CD4-positive, alpha-beta T cell (primary cell): ENCODE measurements at regions of chr15 and their contacts with region 1.

Region 1: GRCh38 chr15:78422571-78423340 is 15.3 kb upstream of the IREB2 start:
- DNase-seq: peak; percentile 43 to 80 (median 54)
- ATAC-seq: peak; percentile 86
- H3K4me3 ChIP-seq: no peak overlapping the region
- H3K4me3 Mint-ChIP-seq: no peak overlapping the region
- H3K27ac ChIP-seq: no peak overlapping the region
- H3K27ac Mint-ChIP-seq: no peak overlapping the region
- H3K4me1 ChIP-seq: peaks cover 7% of the 10 kb centered on the region
- H3K4me1 Mint-ChIP-seq: peaks cover 20% of the 10 kb centered on the region
- H3K27me3 ChIP-seq: peaks cover 0 to 2% of the 10 kb centered on the region in 2 experiments
- H3K27me3 Mint-ChIP-seq: peaks cover 9% of the 10 kb centered on the region
- CTCF ChIP-seq: peak; percentile 93

Region 2: GRCh38 chr15:77966540-77967290 is 456.0 kb before region 1 on chr15:
- CTCF ChIA-PET with region 1: no interaction called
- POLR2A ChIA-PET with region 1: no interaction called
- intact Hi-C with region 1: loop called in 1 of 2 experiments (anchors 5 kb)
- DNase-seq: peak in 13 of 14 experiments; percentile 23 to 73 (median 50)
- ATAC-seq: peak; percentile 44
- H3K4me3 ChIP-seq: no peak overlapping the region
- H3K4me3 Mint-ChIP-seq: no peak overlapping the region
- H3K27ac ChIP-seq: no peak overlapping the region
- H3K27ac Mint-ChIP-seq: no peak overlapping the region
- H3K4me1 ChIP-seq: no peaks in the 10 kb centered on the region
- H3K4me1 Mint-ChIP-seq: no peaks in the 10 kb centered on the region
- H3K27me3 ChIP-seq: no peaks in the 10 kb centered on the region
- H3K27me3 Mint-ChIP-seq: no peaks in the 10 kb centered on the region
- CTCF ChIP-seq: peak; percentile 90

Region 3: DNA sequence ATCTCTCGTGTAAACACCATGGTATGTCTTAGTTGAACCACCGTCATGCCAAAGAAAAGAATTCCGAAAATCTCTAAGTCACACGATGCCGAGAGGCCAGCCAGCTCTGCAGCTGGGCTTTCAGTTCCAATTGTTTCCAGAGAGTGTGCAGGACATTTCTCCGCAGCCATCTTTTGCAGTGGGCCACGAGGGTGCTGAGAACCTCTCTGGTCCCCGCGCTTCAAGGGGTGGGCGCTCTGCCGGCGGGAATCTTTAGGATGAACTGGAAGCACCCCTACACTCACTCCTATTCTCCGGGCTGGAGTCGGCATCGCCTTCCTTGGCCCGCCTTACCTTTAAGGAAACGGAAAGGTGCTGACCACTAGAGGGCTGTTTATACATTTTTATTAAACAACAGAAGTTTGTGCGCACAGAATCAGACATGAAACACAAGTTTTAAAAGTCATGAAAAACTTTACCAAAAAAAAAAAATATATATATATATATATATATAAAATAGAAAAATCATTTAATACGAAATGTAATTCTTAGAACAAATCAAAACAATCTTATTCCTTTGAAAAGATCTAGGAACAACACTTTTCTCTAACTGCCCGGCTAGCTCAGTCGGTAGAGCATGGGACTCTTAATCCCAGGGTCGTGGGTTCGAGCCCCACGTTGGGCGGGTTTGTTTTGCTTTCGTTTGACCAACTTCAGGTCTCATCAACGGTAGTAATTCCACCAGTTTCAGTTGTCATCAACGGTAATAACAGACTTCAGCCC is 437.4 kb after region 1 on chr15:
- CTCF ChIA-PET with region 1: no interaction called
- POLR2A ChIA-PET with region 1: no interaction called
- intact Hi-C with region 1: no loop called
- DNase-seq: peak; percentile 40 to 82 (median 50)
- ATAC-seq: peak; percentile 74
- H3K4me3 ChIP-seq: peak overlapping the region; percentile 54
- H3K4me3 Mint-ChIP-seq: peak overlapping the region; percentile 86
- H3K27ac ChIP-seq: no peak overlapping the region
- H3K27ac Mint-ChIP-seq: peak overlapping the region; percentile 91
- H3K4me1 ChIP-seq: peaks cover 10% of the 10 kb centered on the region
- H3K4me1 Mint-ChIP-seq: peaks cover 14% of the 10 kb centered on the region
- H3K27me3 ChIP-seq: no peaks in the 10 kb centered on the region
- H3K27me3 Mint-ChIP-seq: peaks cover 3% of the 10 kb centered on the region
- CTCF ChIP-seq: peak; percentile 55